ENCODE measurements at regions of chr10 and their contacts with region 1.

Region 1: DNA sequence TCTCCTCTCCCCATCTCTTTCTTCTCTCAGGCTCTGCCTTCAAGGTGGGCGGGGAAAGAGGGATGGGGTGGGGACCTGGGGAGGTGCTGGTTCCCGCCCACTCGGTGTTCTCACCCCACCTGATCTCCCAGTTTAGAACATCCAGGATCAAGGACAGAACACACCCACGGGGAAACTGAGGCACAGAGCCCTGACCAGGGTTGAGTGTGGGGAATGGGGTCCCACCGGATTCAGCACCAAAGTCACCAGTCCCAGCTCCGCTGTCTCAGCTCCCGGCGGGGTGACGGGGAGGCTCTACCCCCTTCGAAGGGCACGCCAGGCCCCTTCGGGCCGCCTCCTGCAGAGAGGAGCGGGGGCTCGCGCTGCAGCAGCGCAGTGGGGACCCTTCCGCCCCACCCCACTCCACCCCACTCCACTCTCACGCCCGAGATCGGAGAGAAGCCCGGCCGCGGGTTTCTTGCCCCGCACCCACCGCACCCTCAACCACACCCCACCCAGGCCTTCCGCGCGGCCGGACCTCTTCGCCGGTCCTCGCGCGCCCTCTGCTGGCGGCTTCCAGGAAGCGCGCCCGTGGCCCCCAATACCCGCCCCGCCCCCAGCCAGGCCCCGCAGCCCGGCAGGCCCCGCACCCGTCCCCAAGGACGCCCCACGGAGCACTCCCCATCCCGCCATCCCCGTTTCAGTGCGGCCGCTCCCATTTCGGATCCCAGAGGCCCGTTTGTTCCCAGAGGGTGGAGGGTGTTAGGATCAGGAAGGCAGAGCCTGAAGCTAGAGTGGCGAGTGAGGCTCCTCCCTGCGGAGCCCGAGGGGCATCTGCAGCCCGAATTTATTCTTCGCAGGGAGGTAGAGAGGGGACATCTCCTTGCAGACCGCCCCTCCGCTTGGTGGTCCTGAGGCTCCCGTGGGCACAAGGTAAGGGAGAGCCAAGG is 18.0 kb downstream of the POLL start:
- DNase-seq: peak; percentile 62
- H3K4me3 ChIP-seq: peak overlapping the region in 2 of 3 experiments; percentile 18 to 39
- H3K27ac ChIP-seq: no peak overlapping the region
- H3K4me1 ChIP-seq: peaks cover 7% of the 10 kb centered on the region
- H3K27me3 ChIP-seq: peaks cover 26 to 27% of the 10 kb centered on the region in 2 experiments
- CTCF ChIP-seq: peak; percentile 46 to 90
- POLR2A ChIP-seq: no peak

Region 2: DNA sequence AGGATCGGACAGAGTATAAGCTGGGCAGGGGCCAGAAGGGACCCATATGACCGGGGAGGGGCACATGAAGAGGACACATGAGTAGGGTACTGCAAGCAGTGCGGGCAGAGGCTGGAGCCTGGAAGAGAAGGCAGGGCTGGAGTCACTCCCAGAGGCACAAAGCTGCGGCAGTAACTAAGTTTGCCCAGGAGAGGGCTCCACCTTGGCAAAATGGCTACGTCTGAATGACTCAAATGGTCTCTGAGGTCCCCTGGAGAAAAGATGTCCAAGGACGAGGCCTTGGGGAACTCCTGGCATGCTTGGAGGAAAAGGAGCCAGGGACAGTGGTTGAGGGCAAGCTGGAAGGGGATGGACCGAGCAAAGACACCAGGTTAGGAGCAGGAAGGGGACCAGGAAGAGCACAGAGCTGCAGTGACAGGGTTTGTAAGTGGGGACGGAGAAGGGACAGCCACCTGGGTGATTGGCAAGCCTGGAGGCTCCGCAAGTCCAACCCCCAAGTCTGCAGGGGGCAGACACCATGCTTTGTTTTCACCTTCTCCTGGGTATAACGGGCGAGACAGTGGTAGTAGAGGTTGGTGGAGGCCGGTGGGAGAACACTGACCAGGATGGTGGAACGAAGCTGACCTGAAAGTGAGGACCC is 297.8 kb before region 1 on chr10:
- CTCF ChIA-PET with region 1: interaction called, 46 read pairs
- POLR2A ChIA-PET with region 1: no interaction called
- dilution Hi-C with region 1: no loop called
- intact Hi-C with region 1: loop called (anchors 1 kb)
- DNase-seq: peak; percentile 70
- H3K4me3 ChIP-seq: no peak overlapping the region
- H3K27ac ChIP-seq: no peak overlapping the region
- H3K4me1 ChIP-seq: no peaks in the 10 kb centered on the region
- H3K27me3 ChIP-seq: peaks cover 3 to 8% of the 10 kb centered on the region in 2 experiments
- CTCF ChIP-seq: peak; percentile 77 to 89
- POLR2A ChIP-seq: no peak

Region 3: GRCh38 chr10:101297901-101298486 is 272.1 kb before region 1 on chr10:
- CTCF ChIA-PET with region 1: interaction called, 60 read pairs
- POLR2A ChIA-PET with region 1: no interaction called
- dilution Hi-C with region 1: no loop called
- intact Hi-C with region 1: loop called (anchors 1 kb)
- DNase-seq: peak; percentile 65
- H3K4me3 ChIP-seq: no peak overlapping the region
- H3K27ac ChIP-seq: no peak overlapping the region
- H3K4me1 ChIP-seq: no peaks in the 10 kb centered on the region
- H3K27me3 ChIP-seq: peaks cover 17 to 37% of the 10 kb centered on the region in 2 experiments
- CTCF ChIP-seq: peak; percentile 91 to 92
- POLR2A ChIP-seq: no peak

Region 4: DNA sequence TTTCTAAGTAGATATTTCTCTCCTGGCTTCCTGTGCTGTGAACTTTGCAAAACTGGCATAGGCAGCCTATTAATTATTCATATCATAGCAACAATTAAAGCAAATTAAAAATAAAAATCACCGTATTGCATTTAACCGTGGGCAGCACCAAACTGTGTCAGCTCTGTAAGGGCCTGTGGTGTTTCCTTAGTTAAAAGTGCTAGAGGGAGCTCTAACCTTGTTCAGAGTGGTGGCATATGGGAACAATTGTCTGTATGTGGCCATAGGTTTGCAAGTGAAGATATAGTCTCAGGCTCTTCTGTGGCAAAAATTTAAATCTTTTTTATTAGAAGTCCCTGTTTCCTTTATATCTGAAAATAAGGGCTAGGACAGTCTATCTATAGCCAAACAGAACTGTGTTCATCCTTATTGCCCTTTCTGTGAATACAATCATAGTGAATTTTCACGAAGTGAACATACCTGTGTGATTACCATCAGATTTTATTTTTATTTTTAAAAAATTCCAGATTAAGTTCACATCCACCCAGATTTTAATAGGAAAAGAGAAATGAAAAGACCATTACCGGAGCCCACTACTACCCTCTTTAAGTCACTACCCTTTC is 74.7 kb before region 1 on chr10:
- CTCF ChIA-PET with region 1: interaction called, 7 read pairs
- POLR2A ChIA-PET with region 1: no interaction called
- dilution Hi-C with region 1: no loop called
- intact Hi-C with region 1: loop called (anchors 1 kb)
- DNase-seq: peak; percentile 34
- H3K4me3 ChIP-seq: no peak overlapping the region
- H3K27ac ChIP-seq: no peak overlapping the region
- H3K4me1 ChIP-seq: no peaks in the 10 kb centered on the region
- H3K27me3 ChIP-seq: no peaks in the 10 kb centered on the region
- CTCF ChIP-seq: peak in 1 of 2 donors; percentile 33
- POLR2A ChIP-seq: no peak

Region 5: GRCh38 chr10:101611096-101611905 is 41.2 kb after region 1 on chr10:
- CTCF ChIA-PET with region 1: no interaction called
- POLR2A ChIA-PET with region 1: no interaction called
- dilution Hi-C with region 1: no loop called
- intact Hi-C with region 1: no loop called
- DNase-seq: no peak
- H3K4me3 ChIP-seq: no peak overlapping the region
- H3K27ac ChIP-seq: no peak overlapping the region
- H3K4me1 ChIP-seq: peaks cover 7% of the 10 kb centered on the region
- H3K27me3 ChIP-seq: no peaks in the 10 kb centered on the region
- CTCF ChIP-seq: no peak
- POLR2A ChIP-seq: no peak

Region 6: GRCh38 chr10:102268375-102268888 is 698.3 kb after region 1 on chr10:
- CTCF ChIA-PET with region 1: no interaction called
- POLR2A ChIA-PET with region 1: no interaction called
- dilution Hi-C with region 1: no loop called
- intact Hi-C with region 1: no loop called
- DNase-seq: peak; percentile 31
- H3K4me3 ChIP-seq: no peak overlapping the region
- H3K27ac ChIP-seq: no peak overlapping the region
- H3K4me1 ChIP-seq: peaks cover 7% of the 10 kb centered on the region
- H3K27me3 ChIP-seq: no peaks in the 10 kb centered on the region
- CTCF ChIP-seq: no peak
- POLR2A ChIP-seq: no peak